Spleen (tissue), 13 donors: ENCODE measurements at regions of chr19 and their contacts with region 1.

Region 1: DNA sequence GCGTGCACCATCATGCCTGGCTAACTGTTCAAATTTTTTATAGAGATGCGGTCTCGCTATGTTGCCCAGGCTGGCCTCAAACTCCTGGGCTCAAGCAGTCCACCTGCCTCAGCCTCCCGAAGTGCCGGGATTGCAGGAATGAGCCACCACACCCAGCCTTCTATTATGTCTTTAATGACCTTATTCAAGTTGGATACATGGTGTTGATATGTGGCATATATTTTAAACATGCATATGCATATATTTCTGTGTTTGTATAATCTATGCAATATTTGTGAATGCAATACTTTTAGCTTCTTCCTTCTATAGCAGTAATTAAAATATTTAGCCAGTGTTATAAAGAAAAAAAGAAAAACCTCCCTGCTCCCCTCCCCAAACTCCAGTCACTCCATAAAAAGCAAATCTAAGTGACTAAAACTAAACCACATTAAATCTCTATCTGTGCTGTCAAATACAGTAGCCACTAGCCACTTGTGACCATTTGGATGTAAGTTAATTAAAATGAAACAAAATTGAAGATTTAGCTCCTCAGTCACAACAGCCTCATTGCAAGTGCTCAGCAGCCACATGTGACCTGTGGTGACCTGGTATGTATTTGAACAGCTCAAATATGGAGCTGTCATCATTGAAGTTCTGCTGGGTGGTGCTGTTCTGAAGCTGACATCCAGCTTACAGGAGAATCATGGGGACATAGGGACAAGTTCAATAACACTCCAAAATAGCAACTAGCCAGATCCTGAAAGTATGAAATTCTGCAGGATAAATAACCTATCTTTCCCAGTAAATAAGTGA is 27.4 kb downstream of the FCGBP start:
- DNase-seq: peak; percentile 14
- H3K4me3 ChIP-seq: no peak overlapping the region
- H3K27ac ChIP-seq: no peak overlapping the region
- H3K4me1 ChIP-seq: peaks cover 0 to 8% (median 3%) of the 10 kb centered on the region in 6 donors
- H3K27me3 ChIP-seq: no peaks in the 10 kb centered on the region
- CTCF ChIP-seq: no peak
- POLR2A ChIP-seq: no peak

Region 2: GRCh38 chr19:40055832-40056504 is 149.0 kb after region 1 on chr19 and contains the start of gene ZNF780B:
- intact Hi-C with region 1: loop called (anchors 5 kb)
- DNase-seq: peak; percentile 92
- H3K4me3 ChIP-seq: peak within 1 kb of the TSS; percentile 75 to 87 (median 78)
- H3K27ac ChIP-seq: peak within 1 kb of the TSS; percentile 33 to 90 (median 81)
- H3K4me1 ChIP-seq: peaks cover 11 to 41% (median 25%) of the 10 kb centered on the region in 6 donors
- H3K27me3 ChIP-seq: no peaks in the 10 kb centered on the region
- CTCF ChIP-seq: no peak
- POLR2A ChIP-seq: no peak
- total RNA-seq, gene ZNF780B: 23.7 to 42.3 (median 32.1) TPM